CD4-positive, alpha-beta T cell (primary cell): ENCODE measurements at regions of chr21 and their contacts with region 1.

Region 1: GRCh38 chr21:25607151-25608043 is at the start of gene MRPL39:
- DNase-seq: peak; percentile 75 to 92 (median 82)
- ATAC-seq: peak; percentile 85
- H3K4me3 ChIP-seq: peak within 1 kb of the TSS; percentile 87
- H3K4me3 Mint-ChIP-seq: peak within 1 kb of the TSS; percentile 100
- H3K27ac ChIP-seq: peak within 1 kb of the TSS; percentile 64 to 67
- H3K27ac Mint-ChIP-seq: peak within 1 kb of the TSS; percentile 92
- H3K4me1 ChIP-seq: peaks cover 24% of the 10 kb centered on the region
- H3K4me1 Mint-ChIP-seq: peaks cover 51% of the 10 kb centered on the region
- H3K27me3 ChIP-seq: no peaks in the 10 kb centered on the region
- H3K27me3 Mint-ChIP-seq: no peaks in the 10 kb centered on the region
- CTCF ChIP-seq: peak; percentile 49
- total RNA-seq, gene MRPL39: 10.7 to 15.2 TPM

Region 2: GRCh38 chr21:25421327-25422028 is 185.9 kb before region 1 on chr21:
- CTCF ChIA-PET with region 1: no interaction called
- POLR2A ChIA-PET with region 1: no interaction called
- intact Hi-C with region 1: loop called in 1 of 2 experiments (anchors 1 kb)
- DNase-seq: peak in 13 of 14 experiments; percentile 14 to 84 (median 39)
- ATAC-seq: peak; percentile 94
- H3K4me3 ChIP-seq: no peak overlapping the region
- H3K4me3 Mint-ChIP-seq: no peak overlapping the region
- H3K27ac ChIP-seq: no peak overlapping the region
- H3K27ac Mint-ChIP-seq: peak overlapping the region; percentile 16
- H3K4me1 ChIP-seq: peaks cover 4% of the 10 kb centered on the region
- H3K4me1 Mint-ChIP-seq: peaks cover 13% of the 10 kb centered on the region
- H3K27me3 ChIP-seq: no peaks in the 10 kb centered on the region
- H3K27me3 Mint-ChIP-seq: no peaks in the 10 kb centered on the region
- CTCF ChIP-seq: peak; percentile 62

Region 3: GRCh38 chr21:25573409-25574206 is 33.8 kb before region 1 on chr21:
- CTCF ChIA-PET with region 1: interaction called, 3 read pairs
- POLR2A ChIA-PET with region 1: interaction called, 4 read pairs
- intact Hi-C with region 1: loop called in 1 of 2 experiments (anchors 5 kb)
- DNase-seq: peak in 9 of 14 experiments; percentile 6 to 84 (median 22)
- ATAC-seq: peak; percentile 83
- H3K4me3 ChIP-seq: peak overlapping the region; percentile 32
- H3K4me3 Mint-ChIP-seq: peak overlapping the region; percentile 84
- H3K27ac ChIP-seq: peak overlapping the region; percentile 59 to 82
- H3K27ac Mint-ChIP-seq: peak overlapping the region; percentile 85
- H3K4me1 ChIP-seq: peaks cover 8% of the 10 kb centered on the region
- H3K4me1 Mint-ChIP-seq: peaks cover 73% of the 10 kb centered on the region
- H3K27me3 ChIP-seq: no peaks in the 10 kb centered on the region
- H3K27me3 Mint-ChIP-seq: no peaks in the 10 kb centered on the region
- CTCF ChIP-seq: no peak

Region 4: GRCh38 chr21:25708467-25709065 is 101.2 kb after region 1 on chr21:
- CTCF ChIA-PET with region 1: interaction called, 10 read pairs
- POLR2A ChIA-PET with region 1: interaction called, 7 read pairs
- intact Hi-C with region 1: loop called (anchors 1 kb)
- DNase-seq: peak; percentile 5 to 76 (median 30)
- ATAC-seq: no peak
- H3K4me3 ChIP-seq: no peak overlapping the region
- H3K4me3 Mint-ChIP-seq: no peak overlapping the region
- H3K27ac ChIP-seq: no peak overlapping the region
- H3K27ac Mint-ChIP-seq: no peak overlapping the region
- H3K4me1 ChIP-seq: no peaks in the 10 kb centered on the region
- H3K4me1 Mint-ChIP-seq: no peaks in the 10 kb centered on the region
- H3K27me3 ChIP-seq: no peaks in the 10 kb centered on the region
- H3K27me3 Mint-ChIP-seq: no peaks in the 10 kb centered on the region
- CTCF ChIP-seq: peak; percentile 96

Region 5: DNA sequence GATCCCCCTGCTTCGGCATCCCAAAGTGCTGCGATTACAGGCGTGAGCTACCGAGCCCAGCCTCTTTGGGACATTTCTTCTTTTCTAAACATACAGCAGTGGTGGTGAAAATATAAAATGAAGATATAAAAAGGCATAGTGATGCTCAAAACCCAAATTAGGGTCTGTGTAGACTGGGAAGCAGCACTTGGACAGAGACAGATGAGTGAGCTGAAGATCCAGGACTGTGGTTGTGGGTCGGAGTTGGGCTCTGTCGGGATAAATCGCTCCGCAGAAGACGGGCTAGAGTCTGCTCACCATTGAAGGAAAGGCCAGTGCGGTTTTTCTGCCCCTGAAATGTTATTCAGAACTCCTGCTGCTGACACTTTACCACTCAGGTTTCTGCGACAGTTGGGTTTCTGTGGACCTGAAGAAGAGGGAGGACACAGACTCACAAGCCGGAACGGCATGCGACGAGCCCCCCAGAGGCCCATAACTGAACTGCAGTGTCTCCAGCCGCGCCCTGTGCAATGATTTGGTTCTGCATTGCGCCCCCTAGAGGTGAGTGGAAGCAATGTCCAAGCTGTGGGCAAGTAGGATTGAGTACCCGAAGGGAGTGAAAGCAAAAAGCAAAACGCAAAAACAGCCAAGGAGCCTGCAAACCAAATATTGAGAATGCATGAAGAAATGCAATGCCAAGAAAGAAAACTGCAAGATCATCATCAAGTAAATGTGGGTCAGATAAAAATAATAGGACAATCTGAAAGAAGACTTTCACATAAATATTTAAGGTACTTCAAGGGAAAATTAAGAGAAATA is 194.0 kb after region 1 on chr21:
- CTCF ChIA-PET with region 1: interaction called, 3 read pairs
- POLR2A ChIA-PET with region 1: interaction called, 3 read pairs
- intact Hi-C with region 1: loop called in 1 of 2 experiments (anchors 5 kb)
- DNase-seq: peak; percentile 67 to 92 (median 78)
- ATAC-seq: peak; percentile 100
- H3K4me3 ChIP-seq: no peak overlapping the region
- H3K4me3 Mint-ChIP-seq: peak overlapping the region; percentile 6
- H3K27ac ChIP-seq: no peak overlapping the region
- H3K27ac Mint-ChIP-seq: no peak overlapping the region
- H3K4me1 ChIP-seq: peaks cover 2% of the 10 kb centered on the region
- H3K4me1 Mint-ChIP-seq: peaks cover 5% of the 10 kb centered on the region
- H3K27me3 ChIP-seq: no peaks in the 10 kb centered on the region
- H3K27me3 Mint-ChIP-seq: peaks cover 19% of the 10 kb centered on the region
- CTCF ChIP-seq: peak; percentile 92

Region 6: DNA sequence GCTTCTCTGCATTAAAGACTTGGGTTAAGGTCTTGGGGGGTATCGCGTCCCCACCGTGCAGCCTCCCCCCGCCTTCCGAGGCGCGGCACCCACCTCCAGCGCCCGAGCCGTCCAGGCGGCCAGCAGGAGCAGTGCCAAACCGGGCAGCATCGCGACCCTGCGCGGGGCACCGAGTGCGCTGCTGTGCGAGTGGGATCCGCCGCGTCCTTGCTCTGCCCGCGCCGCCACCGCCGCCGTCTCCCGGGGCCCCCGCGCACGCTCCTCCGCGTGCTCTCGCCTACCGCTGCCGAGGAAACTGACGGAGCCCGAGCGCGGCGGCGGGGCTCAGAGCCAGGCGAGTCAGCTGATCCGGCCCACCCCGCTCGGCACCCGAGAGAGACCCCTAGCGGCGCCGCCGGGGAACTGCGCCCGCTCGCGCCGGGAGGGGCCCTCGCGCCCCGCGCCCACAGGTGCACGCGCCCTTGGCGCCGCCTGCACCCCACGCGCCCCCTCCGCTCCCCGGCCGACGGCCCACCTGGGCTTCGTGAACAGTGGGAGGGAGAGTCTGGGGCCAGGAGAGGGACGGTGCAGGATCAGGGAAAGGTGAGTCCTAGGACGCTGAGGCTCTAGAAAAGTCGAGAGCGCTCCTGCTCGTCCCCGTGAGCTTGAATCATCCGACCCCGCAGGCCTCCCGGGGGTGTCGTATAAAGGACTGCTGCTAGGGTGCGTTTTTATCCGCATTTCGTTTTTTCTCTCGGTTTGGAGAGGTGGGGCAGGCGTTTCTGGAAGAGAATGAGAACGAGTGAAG is 563.3 kb after region 1 on chr21 and contains the start of gene APP:
- CTCF ChIA-PET with region 1: interaction called, 3 read pairs
- POLR2A ChIA-PET with region 1: no interaction called
- intact Hi-C with region 1: loop called in 1 of 2 experiments (anchors 5 kb)
- DNase-seq: peak; percentile 76 to 94 (median 87)
- ATAC-seq: peak; percentile 83
- H3K4me3 ChIP-seq: peak within 1 kb of the TSS; percentile 83
- H3K4me3 Mint-ChIP-seq: peak within 1 kb of the TSS; percentile 98
- H3K27ac ChIP-seq: peak within 1 kb of the TSS in 1 of 2 donors; percentile 19
- H3K27ac Mint-ChIP-seq: peak within 1 kb of the TSS; percentile 77
- H3K4me1 ChIP-seq: peaks cover 22% of the 10 kb centered on the region
- H3K4me1 Mint-ChIP-seq: peaks cover 23% of the 10 kb centered on the region
- H3K27me3 ChIP-seq: no peaks in the 10 kb centered on the region
- H3K27me3 Mint-ChIP-seq: no peaks in the 10 kb centered on the region
- CTCF ChIP-seq: peak; percentile 79
- total RNA-seq, gene APP: 43.6 to 44.4 TPM